AG04449 (cell line): ENCODE measurements at regions of chr6 and their contacts with region 1.

Region 1: GRCh38 chr6:138428944-138429598 is 25.0 kb downstream of the HEBP2 start:
- DNase-seq: peak; percentile 24
- H3K4me3 ChIP-seq: no peak overlapping the region
- CTCF ChIP-seq: peak; percentile 27

Region 2: GRCh38 chr6:137697267-137697938 is 731.7 kb before region 1 on chr6:
- CTCF ChIA-PET with region 1: no interaction called
- POLR2A ChIA-PET with region 1: no interaction called
- DNase-seq: peak; percentile 12
- H3K4me3 ChIP-seq: no peak overlapping the region
- CTCF ChIP-seq: no peak

Region 3: DNA sequence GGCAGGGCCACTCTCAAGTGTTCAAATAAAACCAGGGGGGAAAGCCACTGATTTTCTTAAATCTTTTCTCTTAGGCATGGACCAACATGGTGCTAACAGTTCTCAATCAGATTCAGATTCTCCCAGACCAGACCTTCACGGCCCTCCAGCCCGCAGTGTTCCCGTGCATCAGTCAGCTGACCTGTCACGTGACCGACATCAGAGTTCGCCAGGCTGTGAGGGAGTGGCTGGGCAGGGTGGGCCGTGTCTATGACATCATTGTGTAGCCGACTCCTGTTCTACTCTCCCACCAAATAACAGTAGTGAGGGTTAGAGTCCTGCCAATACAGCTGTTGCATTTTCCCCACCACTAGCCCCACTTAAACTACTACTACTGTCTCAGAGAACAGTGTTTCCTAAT is 92.8 kb before region 1 on chr6:
- CTCF ChIA-PET with region 1: no interaction called
- POLR2A ChIA-PET with region 1: no interaction called
- DNase-seq: no peak
- H3K4me3 ChIP-seq: no peak overlapping the region
- CTCF ChIP-seq: no peak

Region 4: DNA sequence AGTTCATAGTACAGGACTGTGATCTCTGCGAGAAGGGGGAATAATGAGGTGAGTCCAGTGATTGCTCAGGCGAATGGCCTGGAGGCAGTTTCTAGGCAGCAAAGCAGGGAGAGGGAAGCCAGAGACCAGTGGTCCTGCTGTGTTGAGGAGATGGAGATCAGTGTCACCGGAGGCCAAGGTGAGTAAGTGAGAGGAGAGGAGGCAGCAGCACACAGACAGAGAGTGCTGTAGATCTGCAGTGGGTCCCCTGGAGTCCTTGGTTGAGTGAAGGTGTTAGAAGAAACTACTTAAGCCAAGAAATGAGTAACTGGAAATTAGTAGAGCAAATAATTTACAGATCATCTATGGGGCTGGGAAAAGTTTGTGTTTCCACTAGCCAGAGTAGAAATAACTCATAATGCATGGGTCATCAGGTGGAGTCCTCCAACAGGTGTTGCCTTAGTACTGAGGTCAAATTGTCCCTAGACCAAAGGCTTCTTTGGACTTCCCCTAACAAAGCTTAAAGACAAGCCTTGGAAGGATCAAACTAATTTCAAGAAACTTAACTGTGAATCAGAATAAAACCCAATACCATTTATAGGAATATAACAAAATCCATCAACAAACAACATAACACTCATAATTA is 11.5 kb before region 1 on chr6:
- CTCF ChIA-PET with region 1: interaction called, 10 read pairs
- POLR2A ChIA-PET with region 1: no interaction called
- DNase-seq: no peak
- H3K4me3 ChIP-seq: no peak overlapping the region
- CTCF ChIP-seq: no peak

Region 5: GRCh38 chr6:138450445-138450844 is 21.4 kb after region 1 on chr6:
- CTCF ChIA-PET with region 1: interaction called, 13 read pairs
- POLR2A ChIA-PET with region 1: no interaction called
- DNase-seq: no peak
- H3K4me3 ChIP-seq: no peak overlapping the region
- CTCF ChIP-seq: no peak

Region 6: DNA sequence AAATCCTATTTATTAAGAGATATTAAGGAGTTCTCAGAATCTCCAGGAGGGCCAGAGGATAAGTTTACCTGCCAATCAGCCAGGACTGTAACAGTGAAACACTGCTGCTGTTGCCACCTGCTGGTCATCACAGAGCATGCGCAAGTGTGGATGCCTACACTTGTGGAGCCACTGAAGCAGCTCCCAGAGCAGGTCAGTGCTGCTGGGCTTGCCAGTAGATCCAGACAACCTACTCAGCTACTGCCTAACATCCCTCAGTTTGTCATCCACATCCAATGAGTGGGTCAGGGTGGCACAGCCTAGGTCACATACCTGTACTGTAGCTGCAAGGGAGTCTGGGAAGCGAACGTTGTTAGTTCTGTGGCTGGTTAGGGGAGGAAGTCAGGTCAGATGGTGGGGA is 88.6 kb after region 1 on chr6:
- CTCF ChIA-PET with region 1: interaction called, 121 read pairs
- POLR2A ChIA-PET with region 1: no interaction called
- DNase-seq: no peak
- H3K4me3 ChIP-seq: no peak overlapping the region
- CTCF ChIP-seq: peak; percentile 80

Region 7: GRCh38 chr6:138588805-138589434 is 159.8 kb after region 1 on chr6:
- CTCF ChIA-PET with region 1: interaction called, 77 read pairs
- POLR2A ChIA-PET with region 1: no interaction called
- DNase-seq: no peak
- H3K4me3 ChIP-seq: no peak overlapping the region
- CTCF ChIP-seq: peak; percentile 90